ENCODE measurements at regions of chr12 and their contacts with region 1.

Region 1: DNA sequence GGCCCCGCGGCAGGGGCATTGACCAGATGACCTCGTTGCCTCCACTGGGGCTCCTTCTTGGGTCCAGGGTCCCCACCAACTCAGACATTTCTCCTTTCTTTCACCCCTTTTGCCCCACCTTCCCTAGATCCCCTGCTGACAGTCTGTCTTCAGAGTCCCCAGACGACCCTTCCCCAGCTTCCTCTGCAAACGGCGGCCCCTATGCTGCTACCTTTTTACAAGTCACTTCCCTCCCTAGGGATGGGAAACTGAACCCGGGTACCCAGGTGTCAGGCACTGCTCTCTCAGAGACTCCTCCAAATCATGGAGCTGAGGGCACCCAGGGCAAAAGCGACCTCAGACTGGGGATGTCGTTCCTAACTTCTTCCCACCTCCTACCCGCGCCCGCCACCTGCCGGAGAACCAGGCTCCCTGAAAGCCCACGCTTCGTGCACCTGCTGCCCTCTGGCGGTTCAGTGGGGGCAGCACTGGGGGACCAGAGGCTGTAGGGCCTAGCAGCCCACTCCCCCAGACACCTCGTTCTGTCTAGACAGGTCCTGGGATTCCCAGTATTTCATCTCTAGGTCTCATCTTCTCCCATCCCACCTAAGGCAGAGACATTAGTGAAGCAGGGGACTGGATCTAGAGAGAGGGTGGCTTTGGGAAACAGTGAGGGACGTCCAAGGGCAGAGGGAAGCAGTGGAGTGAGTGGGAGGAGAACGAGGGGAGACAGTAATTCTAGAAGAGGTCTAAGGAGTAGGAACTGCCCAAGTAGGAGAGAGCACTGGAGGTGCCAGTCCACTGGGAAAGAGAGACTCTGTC is 4.9 kb downstream of the ZNF385A start:
- DNase-seq: peak; percentile 83 to 86 (median 84)
- H3K4me3 ChIP-seq: peak overlapping the region in 1 of 2 donors; percentile 38
- H3K4me3 Mint-ChIP-seq: peak overlapping the region; percentile 31 to 75 (median 62)
- H3K27ac ChIP-seq: no peak overlapping the region
- H3K27ac Mint-ChIP-seq: peak overlapping the region in 3 of 7 donors; percentile 24 to 44 (median 41)
- H3K4me1 ChIP-seq: peaks cover 4% of the 10 kb centered on the region
- H3K4me1 Mint-ChIP-seq: peaks cover 3 to 7% (median 5%) of the 10 kb centered on the region in 4 donors
- H3K27me3 ChIP-seq: no peaks in the 10 kb centered on the region
- H3K27me3 Mint-ChIP-seq: no peaks in the 10 kb centered on the region

Region 2: GRCh38 chr12:53200458-53201176 is 1179.0 kb before region 1 on chr12:
- CTCF ChIA-PET with region 1: no interaction called
- POLR2A ChIA-PET with region 1: no interaction called
- intact Hi-C with region 1: no loop called
- DNase-seq: no peak
- H3K4me3 ChIP-seq: peak overlapping the region; percentile 12 to 29
- H3K4me3 Mint-ChIP-seq: peak overlapping the region; percentile 66 to 89 (median 73)
- H3K27ac ChIP-seq: peak overlapping the region; percentile 41
- H3K27ac Mint-ChIP-seq: peak overlapping the region; percentile 73 to 95 (median 86)
- H3K4me1 ChIP-seq: peaks cover 95% of the 10 kb centered on the region
- H3K4me1 Mint-ChIP-seq: peaks cover 48 to 84% (median 66%) of the 10 kb centered on the region in 4 donors
- H3K27me3 ChIP-seq: no peaks in the 10 kb centered on the region
- H3K27me3 Mint-ChIP-seq: no peaks in the 10 kb centered on the region

Region 3: DNA sequence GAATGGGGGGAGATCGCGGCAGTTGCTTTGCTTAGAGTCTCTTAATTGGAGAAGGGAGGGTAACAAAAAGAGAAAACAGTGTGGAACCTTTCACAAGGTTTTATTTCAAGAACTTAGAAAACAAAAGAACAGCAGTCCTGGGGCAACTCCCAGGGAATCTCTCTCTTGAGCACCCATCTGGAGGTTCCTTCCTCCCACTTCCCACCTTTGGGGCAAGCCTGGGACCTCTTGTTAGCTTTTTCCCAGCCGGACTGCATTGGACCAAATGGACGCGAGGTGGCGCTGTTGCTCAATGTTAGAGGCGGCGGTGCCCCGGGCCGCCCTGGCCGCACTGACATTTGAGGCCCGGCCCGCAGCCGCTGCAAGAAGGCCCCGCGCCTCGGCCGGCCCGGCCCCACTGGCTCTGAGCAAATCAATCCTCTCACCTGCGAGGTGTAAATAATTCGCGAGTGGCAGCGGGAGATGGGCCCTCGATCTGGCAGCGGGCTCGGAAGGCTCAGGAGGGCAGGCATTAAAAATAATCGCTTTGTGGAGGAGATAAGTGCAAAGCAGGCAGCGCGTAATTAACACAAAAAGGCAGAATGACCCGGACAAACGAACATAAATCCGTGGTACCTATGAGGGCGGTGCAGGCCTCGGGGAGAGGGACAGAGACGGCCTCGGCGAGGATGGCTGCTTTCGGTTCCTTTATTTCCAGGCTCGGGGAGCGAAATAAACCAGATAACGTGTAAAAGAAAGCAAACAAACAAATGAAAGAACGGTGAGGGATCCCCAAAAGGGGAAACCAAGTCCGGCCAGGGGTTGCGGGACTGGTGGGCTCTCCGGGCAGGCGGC is 373.5 kb before region 1 on chr12:
- CTCF ChIA-PET with region 1: no interaction called
- POLR2A ChIA-PET with region 1: no interaction called
- intact Hi-C with region 1: loop called (anchors 5 kb)
- DNase-seq: peak; percentile 76 to 87 (median 80)
- H3K4me3 ChIP-seq: peak overlapping the region in 1 of 2 donors; percentile 44
- H3K4me3 Mint-ChIP-seq: peak overlapping the region; percentile 64 to 92 (median 79)
- H3K27ac ChIP-seq: no peak overlapping the region
- H3K27ac Mint-ChIP-seq: peak overlapping the region in 5 of 7 donors; percentile 5 to 58 (median 18)
- H3K4me1 ChIP-seq: peaks cover 19% of the 10 kb centered on the region
- H3K4me1 Mint-ChIP-seq: peaks cover 10 to 42% (median 26%) of the 10 kb centered on the region in 4 donors
- H3K27me3 ChIP-seq: peaks cover 84% of the 10 kb centered on the region
- H3K27me3 Mint-ChIP-seq: peaks cover 70 to 85% of the 10 kb centered on the region in 2 donors

Region 4: GRCh38 chr12:54017878-54018467 is 361.6 kb before region 1 on chr12:
- CTCF ChIA-PET with region 1: no interaction called
- POLR2A ChIA-PET with region 1: no interaction called
- intact Hi-C with region 1: no loop called
- DNase-seq: peak; percentile 66 to 74 (median 68)
- H3K4me3 ChIP-seq: peak overlapping the region; percentile 29 to 68
- H3K4me3 Mint-ChIP-seq: peak overlapping the region; percentile 74 to 93 (median 86)
- H3K27ac ChIP-seq: no peak overlapping the region
- H3K27ac Mint-ChIP-seq: peak overlapping the region in 3 of 7 donors; percentile 37 to 57 (median 49)
- H3K4me1 ChIP-seq: peaks cover 21% of the 10 kb centered on the region
- H3K4me1 Mint-ChIP-seq: peaks cover 6 to 31% (median 17%) of the 10 kb centered on the region in 4 donors
- H3K27me3 ChIP-seq: peaks cover 59% of the 10 kb centered on the region
- H3K27me3 Mint-ChIP-seq: peaks cover 49 to 66% of the 10 kb centered on the region in 2 donors

Region 5: GRCh38 chr12:54251667-54252284 is 127.8 kb before region 1 on chr12:
- CTCF ChIA-PET with region 1: interaction called, 33 read pairs
- POLR2A ChIA-PET with region 1: no interaction called
- intact Hi-C with region 1: no loop called
- DNase-seq: peak in 4 of 5 donors; percentile 36 to 52 (median 46)
- H3K4me3 ChIP-seq: no peak overlapping the region
- H3K4me3 Mint-ChIP-seq: no peak overlapping the region
- H3K27ac ChIP-seq: no peak overlapping the region
- H3K27ac Mint-ChIP-seq: peak overlapping the region in 1 of 7 donors; percentile 63
- H3K4me1 ChIP-seq: no peaks in the 10 kb centered on the region
- H3K4me1 Mint-ChIP-seq: peaks cover 4 to 9% (median 6%) of the 10 kb centered on the region in 4 donors
- H3K27me3 ChIP-seq: no peaks in the 10 kb centered on the region
- H3K27me3 Mint-ChIP-seq: no peaks in the 10 kb centered on the region

Region 6: DNA sequence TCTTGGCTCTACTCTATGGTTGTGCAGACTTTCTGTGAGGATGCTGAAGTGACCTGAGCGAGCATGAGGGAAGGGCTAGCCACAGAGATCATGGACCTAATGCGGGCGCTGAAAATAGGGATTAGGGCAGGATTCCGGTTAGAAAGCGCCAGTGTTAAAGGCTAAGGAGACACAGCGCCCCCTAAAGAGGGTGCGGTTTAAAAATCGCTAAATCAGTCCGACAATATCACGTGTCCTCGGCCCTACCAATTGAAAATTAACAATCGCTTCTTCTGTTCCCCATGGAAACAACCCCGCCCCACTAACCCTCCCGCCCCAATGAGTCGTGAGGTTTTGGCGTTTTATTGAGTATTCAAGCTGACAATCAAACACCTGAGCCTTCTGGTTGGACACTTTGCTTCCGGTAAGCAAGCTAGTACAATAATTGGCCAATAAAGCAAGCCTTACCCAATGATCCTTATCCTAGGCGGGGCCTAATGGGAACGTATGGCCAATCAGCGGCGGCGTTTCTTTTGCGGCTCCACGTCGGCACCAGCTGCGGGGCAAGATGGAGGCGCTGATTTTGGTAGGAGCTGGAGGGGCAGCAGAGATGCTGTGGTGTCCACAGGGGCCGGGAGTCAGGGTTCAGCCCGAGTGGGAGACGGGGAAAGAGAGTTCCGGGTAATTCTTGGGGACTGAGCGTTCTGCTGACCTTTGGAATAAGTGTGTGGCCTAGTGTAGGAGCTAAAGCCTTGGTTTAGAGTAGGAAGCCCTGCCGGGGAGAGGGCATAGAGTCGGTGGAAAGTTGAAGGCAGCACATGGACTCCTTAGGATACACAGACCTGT is 54.8 kb before region 1 on chr12 and contains the start of gene COPZ1:
- CTCF ChIA-PET with region 1: interaction called, 12 read pairs
- POLR2A ChIA-PET with region 1: no interaction called
- intact Hi-C with region 1: no loop called
- DNase-seq: peak; percentile 93 to 99 (median 95)
- H3K4me3 ChIP-seq: peak within 1 kb of the TSS; percentile 92 to 93
- H3K4me3 Mint-ChIP-seq: peak within 1 kb of the TSS; percentile 94 to 100 (median 98)
- H3K27ac ChIP-seq: peak within 1 kb of the TSS; percentile 86
- H3K27ac Mint-ChIP-seq: peak within 1 kb of the TSS; percentile 93 to 99 (median 98)
- H3K4me1 ChIP-seq: peaks cover 44% of the 10 kb centered on the region
- H3K4me1 Mint-ChIP-seq: peaks cover 28 to 47% (median 38%) of the 10 kb centered on the region in 4 donors
- H3K27me3 ChIP-seq: no peaks in the 10 kb centered on the region
- H3K27me3 Mint-ChIP-seq: no peaks in the 10 kb centered on the region
- total RNA-seq, gene COPZ1: 81.6 to 92.0 TPM

Region 7: GRCh38 chr12:54368709-54369583 is 10.7 kb before region 1 on chr12:
- CTCF ChIA-PET with region 1: interaction called, 41 read pairs
- POLR2A ChIA-PET with region 1: interaction called, 5 read pairs
- intact Hi-C with region 1: no loop called
- DNase-seq: peak; percentile 81 to 88 (median 84)
- H3K4me3 ChIP-seq: peak overlapping the region in 1 of 2 donors; percentile 27
- H3K4me3 Mint-ChIP-seq: peak overlapping the region; percentile 63 to 90 (median 76)
- H3K27ac ChIP-seq: peak overlapping the region; percentile 37
- H3K27ac Mint-ChIP-seq: peak overlapping the region; percentile 30 to 86 (median 79)
- H3K4me1 ChIP-seq: peaks cover 33% of the 10 kb centered on the region
- H3K4me1 Mint-ChIP-seq: peaks cover 20 to 50% (median 31%) of the 10 kb centered on the region in 4 donors
- H3K27me3 ChIP-seq: no peaks in the 10 kb centered on the region
- H3K27me3 Mint-ChIP-seq: peaks cover 0 to 3% of the 10 kb centered on the region in 2 donors

Region 8: GRCh38 chr12:54411391-54412241 is 32.0 kb after region 1 on chr12:
- CTCF ChIA-PET with region 1: interaction called, 18 read pairs
- POLR2A ChIA-PET with region 1: no interaction called
- intact Hi-C with region 1: no loop called
- DNase-seq: peak in 3 of 5 donors; percentile 38 to 66 (median 43)
- H3K4me3 ChIP-seq: peak overlapping the region; percentile 8 to 94
- H3K4me3 Mint-ChIP-seq: peak overlapping the region; percentile 72 to 90 (median 82)
- H3K27ac ChIP-seq: peak overlapping the region; percentile 92
- H3K27ac Mint-ChIP-seq: peak overlapping the region; percentile 90 to 100 (median 97)
- H3K4me1 ChIP-seq: peaks cover 73% of the 10 kb centered on the region
- H3K4me1 Mint-ChIP-seq: peaks cover 40 to 84% (median 71%) of the 10 kb centered on the region in 4 donors
- H3K27me3 ChIP-seq: no peaks in the 10 kb centered on the region
- H3K27me3 Mint-ChIP-seq: no peaks in the 10 kb centered on the region

Region 9: GRCh38 chr12:54448344-54448743 is 68.7 kb after region 1 on chr12:
- CTCF ChIA-PET with region 1: interaction called, 10 read pairs
- POLR2A ChIA-PET with region 1: interaction called, 3 read pairs
- intact Hi-C with region 1: no loop called
- DNase-seq: no peak
- H3K4me3 ChIP-seq: no peak overlapping the region
- H3K4me3 Mint-ChIP-seq: no peak overlapping the region
- H3K27ac ChIP-seq: no peak overlapping the region
- H3K27ac Mint-ChIP-seq: no peak overlapping the region
- H3K4me1 ChIP-seq: no peaks in the 10 kb centered on the region
- H3K4me1 Mint-ChIP-seq: no peaks in the 10 kb centered on the region
- H3K27me3 ChIP-seq: no peaks in the 10 kb centered on the region
- H3K27me3 Mint-ChIP-seq: no peaks in the 10 kb centered on the region

Measured in CD4-positive, alpha-beta memory T cell (primary cell).